ENCODE measurements at regions of chr14 and their contacts with region 1.

Region 1: GRCh38 chr14:97432586-97432985 is 635.4 kb downstream of the VRK1 start:
- DNase-seq: no peak
- ATAC-seq: peak; percentile 50
- H3K4me3 ChIP-seq: no peak overlapping the region
- H3K4me3 Mint-ChIP-seq: no peak overlapping the region
- H3K27ac ChIP-seq: no peak overlapping the region
- H3K27ac Mint-ChIP-seq: no peak overlapping the region
- H3K4me1 ChIP-seq: peaks cover 0 to 5% of the 10 kb centered on the region in 2 donors
- H3K4me1 Mint-ChIP-seq: peaks cover 0 to 11% (median 0%) of the 10 kb centered on the region in 7 donors
- H3K27me3 ChIP-seq: no peaks in the 10 kb centered on the region
- H3K27me3 Mint-ChIP-seq: peaks cover 0 to 2% (median 0%) of the 10 kb centered on the region in 5 donors

Region 2: DNA sequence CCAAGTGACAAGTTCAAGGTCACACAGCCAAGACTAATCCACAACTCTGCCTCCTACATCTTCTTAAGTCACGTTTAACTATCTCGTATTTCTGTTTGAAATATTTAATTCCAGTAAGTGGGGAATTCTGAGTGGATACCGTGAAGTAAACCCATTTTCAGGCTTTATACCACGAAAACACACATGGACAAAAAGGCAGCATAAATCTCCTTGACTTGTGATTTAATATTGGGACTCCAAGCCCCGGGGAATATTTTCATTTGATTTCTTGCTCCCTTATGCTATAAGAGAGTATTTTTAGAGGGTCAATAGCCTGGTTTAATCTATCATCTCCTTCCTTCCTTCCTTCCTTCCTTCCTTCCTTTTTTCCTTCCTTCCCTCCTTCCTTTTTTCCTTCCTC is 81.3 kb after region 1 on chr14:
- CTCF ChIA-PET with region 1: no interaction called
- POLR2A ChIA-PET with region 1: no interaction called
- intact Hi-C with region 1: loop called in 1 of 2 experiments (anchors 2 kb)
- DNase-seq: no peak
- ATAC-seq: no peak
- H3K4me3 ChIP-seq: no peak overlapping the region
- H3K4me3 Mint-ChIP-seq: no peak overlapping the region
- H3K27ac ChIP-seq: no peak overlapping the region
- H3K27ac Mint-ChIP-seq: no peak overlapping the region
- H3K4me1 ChIP-seq: no peaks in the 10 kb centered on the region
- H3K4me1 Mint-ChIP-seq: peaks cover 0 to 5% (median 0%) of the 10 kb centered on the region in 7 donors
- H3K27me3 ChIP-seq: no peaks in the 10 kb centered on the region
- H3K27me3 Mint-ChIP-seq: no peaks in the 10 kb centered on the region